HepG2 (cell line): ENCODE measurements at regions of chr11 and their contacts with region 1.

Region 1: GRCh38 chr11:910589-911195 is at the start of gene CHID1:
- DNase-seq: peak; percentile 79
- ATAC-seq: peak; percentile 92
- H3K4me3 ChIP-seq: peak within 1 kb of the TSS; percentile 92 to 95 (median 93)
- H3K27ac ChIP-seq: peak within 1 kb of the TSS; percentile 89
- H3K4me1 ChIP-seq: peaks cover 48% of the 10 kb centered on the region
- H3K27me3 ChIP-seq: no peaks in the 10 kb centered on the region; a peak in 2 of 5 replicates
- CTCF ChIP-seq: peak; percentile 7; the same call in 1 of the 2 replicates
- EP300 ChIP-seq: peak in 1 of 2 experiments; percentile 20; a peak in 1 of 4 replicates
- POLR2A ChIP-seq: peak; percentile 69 to 80; a peak in 3 of 4 replicates
- RAD21 ChIP-seq: no peak; the same call in 1 of the 2 replicates
- total RNA-seq, gene CHID1: 39.6 and 65.1 TPM in 2 replicates

Region 2: DNA sequence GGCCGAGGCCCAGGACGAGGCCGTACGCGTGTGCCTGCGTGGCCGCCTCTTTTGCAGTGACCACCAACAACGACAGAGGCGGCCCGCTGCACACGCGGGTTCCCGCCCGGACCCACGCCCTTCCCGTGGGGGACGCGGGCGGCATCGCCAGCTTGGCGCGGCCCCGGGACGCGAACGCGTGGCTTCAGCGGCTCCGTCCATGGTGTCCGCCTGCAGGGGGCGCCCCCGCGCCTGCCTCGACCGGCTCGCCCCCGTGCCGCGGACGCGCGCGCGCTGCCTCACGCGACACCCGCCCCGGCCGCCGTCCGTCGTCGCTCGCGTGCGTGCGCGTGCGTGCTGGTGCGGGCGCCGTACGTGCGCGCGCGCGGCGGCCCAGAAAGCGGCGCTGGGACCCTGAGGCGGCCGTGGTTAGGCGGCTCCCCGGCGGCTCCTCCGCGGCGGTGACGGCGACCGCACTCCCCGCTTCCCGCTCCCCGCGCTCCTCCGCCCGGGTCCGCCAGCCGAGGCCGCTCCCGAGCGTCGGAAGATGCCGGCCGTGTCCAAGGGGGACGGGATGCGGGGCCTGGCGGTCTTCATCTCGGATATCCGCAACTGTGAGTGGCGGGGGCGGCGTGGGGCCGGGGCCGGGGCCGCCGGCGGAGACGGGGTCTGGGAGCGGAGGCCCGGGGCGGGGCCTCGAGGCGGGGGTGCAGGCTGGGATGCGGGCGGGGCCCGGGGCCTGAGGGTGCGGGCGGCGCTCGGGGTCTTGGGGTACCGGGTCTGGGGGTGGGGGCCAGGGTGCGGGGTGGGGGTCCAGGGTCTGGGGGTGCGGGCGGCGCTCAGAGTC is 15.0 kb after region 1 on chr11 and contains the start of gene AP2A2:
- CTCF ChIA-PET with region 1: no interaction called
- POLR2A ChIA-PET with region 1: interaction called, 20 read pairs
- in situ Hi-C with region 1: no loop called
- intact Hi-C with region 1: no loop called
- DNase-seq: peak; percentile 58
- ATAC-seq: peak; percentile 11
- H3K4me3 ChIP-seq: peak within 1 kb of the TSS; percentile 75 to 84 (median 79)
- H3K27ac ChIP-seq: peak within 1 kb of the TSS; percentile 71
- H3K4me1 ChIP-seq: peaks cover 83% of the 10 kb centered on the region
- H3K27me3 ChIP-seq: no peaks in the 10 kb centered on the region; a peak in 1 of 5 replicates
- CTCF ChIP-seq: peak; percentile 75
- EP300 ChIP-seq: no peak
- POLR2A ChIP-seq: 0 out of 4 replicates have a peak, but pooled peaks of 1 of the 2 experiments have one; percentile 8
- RAD21 ChIP-seq: peak; percentile 91
- total RNA-seq, gene AP2A2: 25.7 and 25.9 TPM in 2 replicates

Region 3: DNA sequence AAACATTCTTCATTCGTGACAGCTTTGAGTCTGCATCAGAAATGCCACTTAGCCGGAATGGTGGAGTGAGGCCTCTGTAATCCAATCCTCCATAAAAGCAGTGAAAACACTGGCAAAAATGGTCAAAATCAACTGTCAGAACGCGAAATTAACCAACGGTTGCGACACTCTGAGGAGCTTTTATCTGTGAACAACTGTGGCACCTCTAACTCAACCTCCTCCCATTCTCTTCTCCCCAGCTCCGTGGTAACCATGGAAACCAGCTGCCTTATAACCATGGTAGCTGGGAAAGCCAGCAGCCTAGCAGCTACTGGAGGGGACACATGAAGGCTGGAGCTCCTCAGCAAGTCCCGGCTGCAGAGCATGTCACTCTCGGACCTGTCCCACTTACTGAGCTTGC is 35.3 kb after region 1 on chr11:
- CTCF ChIA-PET with region 1: no interaction called
- POLR2A ChIA-PET with region 1: interaction called, 6 read pairs
- in situ Hi-C with region 1: no loop called
- intact Hi-C with region 1: loop called (anchors 2 kb)
- DNase-seq: peak; percentile 59
- ATAC-seq: peak; percentile 36
- H3K4me3 ChIP-seq: no peak overlapping the region
- H3K27ac ChIP-seq: peak overlapping the region; percentile 27
- H3K4me1 ChIP-seq: peaks cover 95% of the 10 kb centered on the region
- H3K27me3 ChIP-seq: no peaks in the 10 kb centered on the region
- CTCF ChIP-seq: no peak
- EP300 ChIP-seq: no peak
- POLR2A ChIP-seq: no peak
- RAD21 ChIP-seq: no peak

Region 4: DNA sequence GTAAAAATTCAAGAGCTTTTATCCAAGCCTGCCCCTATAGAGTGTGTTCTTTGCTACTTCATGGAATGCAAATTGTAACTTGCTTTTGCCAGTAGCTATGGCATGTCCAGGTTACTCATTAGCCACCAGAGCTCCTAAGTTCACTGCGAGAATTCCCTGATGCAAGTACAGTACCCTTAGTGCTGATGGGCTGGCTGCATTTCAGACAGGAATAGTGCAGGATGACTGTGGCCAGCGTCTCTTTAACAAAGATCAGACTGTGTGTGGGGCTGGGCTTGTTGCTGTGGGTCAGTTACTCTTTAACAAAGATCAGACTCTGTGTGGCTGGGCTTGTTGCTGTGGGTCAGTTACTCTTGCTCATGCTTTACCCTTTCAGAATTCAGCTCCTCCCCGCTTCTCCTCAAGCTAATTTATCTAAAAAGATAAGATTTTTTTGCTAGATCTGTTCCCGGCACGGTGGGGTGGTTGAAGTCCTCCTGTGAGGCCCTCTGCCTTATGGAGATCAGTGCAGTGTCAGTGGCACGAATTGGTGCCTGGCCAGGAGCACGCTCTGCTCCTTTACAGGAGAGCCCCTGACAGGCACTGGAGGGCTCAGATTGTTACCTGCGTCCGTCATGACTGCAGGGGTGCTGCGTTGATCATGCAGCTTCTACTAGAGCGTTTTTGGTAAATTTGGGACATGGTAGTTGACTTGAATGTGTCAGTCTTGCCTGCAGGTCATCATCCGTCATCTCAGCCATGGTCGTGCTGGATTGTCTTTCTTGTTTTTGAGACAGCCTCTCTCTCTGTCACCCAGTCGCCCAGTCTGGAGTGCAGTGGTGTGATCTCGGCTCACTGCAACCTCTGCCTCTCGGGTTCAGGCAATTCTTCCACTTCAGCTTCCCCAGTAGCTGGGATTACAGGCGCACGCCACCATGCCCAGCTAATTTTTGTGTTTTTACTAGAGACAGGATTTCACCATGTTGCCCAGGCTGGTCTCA is 42.0 kb after region 1 on chr11:
- CTCF ChIA-PET with region 1: no interaction called
- POLR2A ChIA-PET with region 1: interaction called, 24 read pairs
- in situ Hi-C with region 1: no loop called
- intact Hi-C with region 1: loop called (anchors 2 kb)
- DNase-seq: peak; percentile 99
- ATAC-seq: peak; percentile 98
- H3K4me3 ChIP-seq: peak overlapping the region; percentile 25 to 68 (median 50); a peak in 5 of 6 replicates
- H3K27ac ChIP-seq: peak overlapping the region; percentile 95
- H3K4me1 ChIP-seq: peaks cover 85% of the 10 kb centered on the region
- H3K27me3 ChIP-seq: no peaks in the 10 kb centered on the region
- CTCF ChIP-seq: no peak; the same call in 1 of the 2 replicates
- EP300 ChIP-seq: peak in 1 of 2 experiments; percentile 77; a peak in 2 of 4 replicates
- POLR2A ChIP-seq: peak; percentile 65 to 67; a peak in 3 of 4 replicates
- RAD21 ChIP-seq: 0 out of 2 replicates have a peak, but pooled peaks have one; percentile 20

Region 5: GRCh38 chr11:975827-976226 is 65.1 kb after region 1 on chr11:
- CTCF ChIA-PET with region 1: no interaction called
- POLR2A ChIA-PET with region 1: no interaction called
- in situ Hi-C with region 1: no loop called
- intact Hi-C with region 1: loop called (anchors 2 kb)
- DNase-seq: peak; percentile 44
- ATAC-seq: peak; percentile 66
- H3K4me3 ChIP-seq: no peak overlapping the region
- H3K27ac ChIP-seq: no peak overlapping the region
- H3K4me1 ChIP-seq: no peaks in the 10 kb centered on the region
- H3K27me3 ChIP-seq: no peaks in the 10 kb centered on the region
- CTCF ChIP-seq: peak; percentile 65
- EP300 ChIP-seq: no peak
- POLR2A ChIP-seq: no peak
- RAD21 ChIP-seq: peak; percentile 82

Region 6: GRCh38 chr11:1181867-1182535 is 271.3 kb after region 1 on chr11:
- CTCF ChIA-PET with region 1: no interaction called
- POLR2A ChIA-PET with region 1: no interaction called
- in situ Hi-C with region 1: no loop called
- intact Hi-C with region 1: no loop called
- DNase-seq: no peak
- ATAC-seq: no peak; the same call in 2 of the 3 replicates
- H3K4me3 ChIP-seq: no peak overlapping the region
- H3K27ac ChIP-seq: no peak overlapping the region
- H3K4me1 ChIP-seq: no peaks in the 10 kb centered on the region
- H3K27me3 ChIP-seq: peaks cover 3 to 44% of the 10 kb centered on the region in 2 experiments; a peak in 4 of 5 replicates
- CTCF ChIP-seq: no peak
- EP300 ChIP-seq: no peak
- POLR2A ChIP-seq: no peak
- RAD21 ChIP-seq: no peak